Adrenal gland (tissue), 19 donors: ENCODE measurements at regions of chr5 and their contacts with region 1.

Region 1: DNA sequence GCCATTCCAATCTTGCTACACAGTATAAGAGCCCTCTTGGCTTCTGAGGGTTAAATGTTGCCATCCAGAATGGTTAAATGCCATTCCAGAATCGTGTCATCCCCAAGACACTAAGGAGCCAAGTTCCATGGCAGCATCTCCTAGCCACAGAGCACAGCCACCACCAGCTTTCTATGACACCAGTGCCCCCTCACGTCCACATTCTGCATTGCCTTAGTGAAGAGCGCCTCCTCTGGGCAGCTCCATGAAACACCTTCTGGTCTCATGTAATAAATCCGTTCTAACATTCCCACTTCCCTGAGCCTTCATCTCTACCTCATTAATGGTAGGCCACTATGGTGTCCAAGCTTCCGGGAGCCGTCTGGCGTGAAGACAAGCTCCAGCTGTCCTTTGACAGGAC is 12.4 kb downstream of the CBY3 start:
- DNase-seq: peak in 6 of 7 donors; percentile 32 to 74 (median 58)
- H3K4me3 ChIP-seq: no peak overlapping the region
- H3K27ac ChIP-seq: no peak overlapping the region
- H3K4me1 ChIP-seq: no peaks in the 10 kb centered on the region
- H3K27me3 ChIP-seq: no peaks in the 10 kb centered on the region
- CTCF ChIP-seq: peak; percentile 31 to 84 (median 66)
- POLR2A ChIP-seq: no peak

Region 2: DNA sequence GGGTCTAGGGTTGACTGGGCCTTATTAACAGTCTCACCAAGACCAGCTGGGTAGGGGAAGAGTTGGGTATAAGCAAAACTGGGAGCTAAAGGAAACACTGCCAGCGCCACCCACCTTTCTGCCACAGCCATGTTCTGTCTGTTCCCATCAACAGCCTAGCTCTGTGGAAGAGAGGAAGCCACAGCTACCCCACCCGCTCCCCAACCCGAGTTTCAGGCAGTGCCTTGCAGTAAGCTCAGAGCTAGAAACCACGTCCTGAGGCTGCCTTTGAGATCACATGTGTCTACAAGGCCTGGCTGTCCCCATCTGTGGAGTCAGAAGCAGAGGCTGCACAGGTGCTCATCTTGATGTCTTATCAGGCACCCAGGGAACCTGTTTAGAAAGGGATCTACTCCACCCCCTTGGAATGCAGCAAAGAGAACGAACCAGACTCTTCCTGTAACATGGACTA is 60.2 kb before region 1 on chr5:
- intact Hi-C with region 1: loop called in 1 of 2 experiments (anchors 5 kb)
- DNase-seq: peak in 1 of 7 donors; percentile 63
- H3K4me3 ChIP-seq: no peak overlapping the region
- H3K27ac ChIP-seq: peak overlapping the region in 2 of 5 donors; percentile 39 to 71
- H3K4me1 ChIP-seq: peaks cover 0 to 23% of the 10 kb centered on the region in 2 donors
- H3K27me3 ChIP-seq: no peaks in the 10 kb centered on the region
- CTCF ChIP-seq: no peak
- POLR2A ChIP-seq: no peak

Region 3: GRCh38 chr5:179621551-179622214 is 46.7 kb before region 1 on chr5:
- intact Hi-C with region 1: no loop called
- DNase-seq: no peak
- H3K4me3 ChIP-seq: peak overlapping the region in 2 of 4 donors; percentile 73 to 98
- H3K27ac ChIP-seq: peak overlapping the region in 4 of 5 donors; percentile 75 to 100 (median 84)
- H3K4me1 ChIP-seq: peaks cover 33 to 64% of the 10 kb centered on the region in 2 donors
- H3K27me3 ChIP-seq: no peaks in the 10 kb centered on the region
- CTCF ChIP-seq: no peak
- POLR2A ChIP-seq: no peak